ENCODE measurements at regions of chr3 and their contacts with region 1.

Region 1: DNA sequence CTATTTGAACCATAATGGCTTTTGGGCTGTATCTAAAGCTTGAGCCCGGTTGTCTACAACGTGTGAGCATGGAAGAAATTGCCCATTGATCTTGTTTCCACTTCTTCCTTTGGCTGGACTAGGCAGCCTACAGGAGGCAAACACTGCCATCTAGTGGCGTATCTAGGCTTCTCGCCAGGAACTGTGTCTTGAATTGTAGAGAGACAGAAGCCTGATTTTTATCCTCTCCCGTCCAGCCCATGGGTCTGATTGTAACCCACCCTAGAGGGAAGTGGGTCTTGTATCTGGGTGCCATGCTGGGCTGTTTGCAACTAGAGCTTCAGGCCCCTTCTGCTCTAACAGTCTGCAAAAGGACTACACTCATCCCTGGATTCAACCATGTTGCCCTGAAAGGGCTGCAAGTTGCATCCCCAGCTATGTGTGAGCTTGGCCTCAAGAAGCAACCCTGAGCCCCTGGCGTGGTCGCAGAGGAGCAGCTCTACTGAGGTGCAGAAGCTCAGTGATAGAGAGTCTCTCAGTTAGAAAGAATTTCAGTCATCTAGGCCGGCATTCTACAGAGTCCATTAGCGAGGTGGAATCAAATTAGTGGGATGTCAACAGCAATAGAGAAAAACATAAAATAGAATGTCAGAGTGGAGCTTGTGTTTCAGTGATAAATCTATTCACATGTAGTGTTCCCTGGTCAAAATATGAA is 170.2 kb upstream of the UMPS start:
- H3K4me3 ChIP-seq: no peak overlapping the region
- H3K27ac ChIP-seq: no peak overlapping the region
- H3K4me1 ChIP-seq: peaks cover 2% of the 10 kb centered on the region; the same call in 1 of the 2 replicates
- CTCF ChIP-seq: peak; percentile 68

Region 2: GRCh38 chr3:124014366-124014942 is 545.6 kb before region 1 on chr3:
- CTCF ChIA-PET with region 1: interaction called, 47 read pairs
- POLR2A ChIA-PET with region 1: no interaction called
- H3K4me3 ChIP-seq: no peak overlapping the region
- H3K27ac ChIP-seq: no peak overlapping the region
- H3K4me1 ChIP-seq: no peaks in the 10 kb centered on the region; the same call in 1 of the 2 replicates
- CTCF ChIP-seq: no peak

Region 3: GRCh38 chr3:124351430-124352148 is 208.4 kb before region 1 on chr3:
- CTCF ChIA-PET with region 1: interaction called, 44 read pairs
- POLR2A ChIA-PET with region 1: no interaction called
- H3K4me3 ChIP-seq: no peak overlapping the region
- H3K27ac ChIP-seq: no peak overlapping the region
- H3K4me1 ChIP-seq: no peaks in the 10 kb centered on the region
- CTCF ChIP-seq: no peak

Region 4: GRCh38 chr3:124467980-124468902 is 91.8 kb before region 1 on chr3:
- CTCF ChIA-PET with region 1: interaction called, 39 read pairs
- POLR2A ChIA-PET with region 1: interaction called, 3 read pairs
- H3K4me3 ChIP-seq: no peak overlapping the region
- H3K27ac ChIP-seq: no peak overlapping the region
- H3K4me1 ChIP-seq: no peaks in the 10 kb centered on the region
- CTCF ChIP-seq: peak; percentile 85

Region 5: GRCh38 chr3:124486324-124486723 is 73.7 kb before region 1 on chr3:
- CTCF ChIA-PET with region 1: interaction called, 27 read pairs
- POLR2A ChIA-PET with region 1: no interaction called
- H3K4me3 ChIP-seq: no peak overlapping the region
- H3K27ac ChIP-seq: no peak overlapping the region
- H3K4me1 ChIP-seq: no peaks in the 10 kb centered on the region
- CTCF ChIP-seq: no peak

Region 6: DNA sequence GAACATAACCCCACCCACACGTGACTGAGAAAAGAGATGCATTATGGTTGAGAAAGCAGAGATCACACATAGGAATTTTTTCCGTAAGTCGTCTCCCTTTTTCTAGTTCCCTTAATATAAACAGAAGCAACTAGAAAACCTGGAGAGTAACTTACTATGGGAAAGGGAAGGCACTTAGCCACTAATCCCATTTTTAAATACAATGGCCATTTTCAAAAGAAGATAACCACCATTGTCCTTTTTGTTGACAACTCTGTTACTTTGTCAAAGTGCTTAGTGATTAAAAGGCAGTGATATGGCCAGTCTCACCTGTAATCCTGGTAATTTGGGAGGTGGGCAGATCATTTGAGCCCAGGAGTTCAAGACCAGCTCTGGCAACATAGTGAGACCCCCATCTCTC is 14.1 kb before region 1 on chr3:
- CTCF ChIA-PET with region 1: interaction called, 49 read pairs
- POLR2A ChIA-PET with region 1: no interaction called
- H3K4me3 ChIP-seq: no peak overlapping the region
- H3K27ac ChIP-seq: no peak overlapping the region
- H3K4me1 ChIP-seq: no peaks in the 10 kb centered on the region
- CTCF ChIP-seq: no peak

Region 7: GRCh38 chr3:124592621-124593441 is 32.8 kb after region 1 on chr3:
- CTCF ChIA-PET with region 1: no interaction called
- POLR2A ChIA-PET with region 1: no interaction called
- H3K4me3 ChIP-seq: no peak overlapping the region
- H3K27ac ChIP-seq: no peak overlapping the region
- H3K4me1 ChIP-seq: no peaks in the 10 kb centered on the region
- CTCF ChIP-seq: no peak

Region 8: GRCh38 chr3:124688581-124689454 is 128.8 kb after region 1 on chr3:
- CTCF ChIA-PET with region 1: interaction called, 96 read pairs
- POLR2A ChIA-PET with region 1: no interaction called
- H3K4me3 ChIP-seq: no peak overlapping the region
- H3K27ac ChIP-seq: no peak overlapping the region
- H3K4me1 ChIP-seq: no peaks in the 10 kb centered on the region
- CTCF ChIP-seq: peak; percentile 58